ENCODE measurements at regions of chr7 and their contacts with region 1.

Region 1: GRCh38 chr7:17640730-17641377 is 299.4 kb downstream of the SNX13 start:
- DNase-seq: peak; percentile 28
- ATAC-seq: 0 out of 3 replicates have a peak, but pooled peaks have one; percentile 31
- H3K4me3 ChIP-seq: no peak overlapping the region
- H3K27ac ChIP-seq: no peak overlapping the region
- H3K4me1 ChIP-seq: peaks cover 7% of the 10 kb centered on the region; the same call in 1 of the 2 replicates
- H3K27me3 ChIP-seq: no peaks in the 10 kb centered on the region; a peak in 1 of 5 replicates
- CTCF ChIP-seq: peak; percentile 34
- EP300 ChIP-seq: no peak
- POLR2A ChIP-seq: no peak
- RAD21 ChIP-seq: 0 out of 2 replicates have a peak, but pooled peaks have one; percentile 10

Region 2: DNA sequence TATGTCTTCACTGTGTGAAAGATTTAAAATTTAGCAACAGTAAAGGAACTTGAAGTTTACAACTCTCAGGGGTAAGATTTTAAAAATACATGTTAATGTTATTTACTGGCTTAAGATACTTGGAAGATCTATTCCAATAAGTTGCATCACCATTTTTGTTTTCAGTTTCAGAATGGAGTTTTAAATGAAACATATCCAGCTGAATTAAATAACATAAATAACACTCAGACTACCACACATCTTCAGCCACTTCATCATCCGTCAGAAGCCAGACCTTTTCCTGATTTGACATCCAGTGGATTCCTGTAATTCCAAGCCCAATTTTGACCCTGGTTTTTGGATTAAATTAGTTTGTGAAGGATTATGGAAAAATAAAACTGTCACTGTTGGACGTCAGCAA is 298.1 kb before region 1 on chr7:
- CTCF ChIA-PET with region 1: no interaction called
- POLR2A ChIA-PET with region 1: no interaction called
- in situ Hi-C with region 1: no loop called
- intact Hi-C with region 1: loop called (anchors 10 kb)
- DNase-seq: no peak
- ATAC-seq: no peak
- H3K4me3 ChIP-seq: no peak overlapping the region
- H3K27ac ChIP-seq: no peak overlapping the region
- H3K4me1 ChIP-seq: no peaks in the 10 kb centered on the region
- H3K27me3 ChIP-seq: no peaks in the 10 kb centered on the region
- CTCF ChIP-seq: no peak
- EP300 ChIP-seq: no peak
- POLR2A ChIP-seq: no peak
- RAD21 ChIP-seq: no peak

Region 3: GRCh38 chr7:17546599-17546998 is 94.3 kb before region 1 on chr7:
- CTCF ChIA-PET with region 1: no interaction called
- POLR2A ChIA-PET with region 1: no interaction called
- in situ Hi-C with region 1: no loop called
- intact Hi-C with region 1: loop called (anchors 10 kb)
- DNase-seq: no peak
- ATAC-seq: no peak
- H3K4me3 ChIP-seq: no peak overlapping the region
- H3K27ac ChIP-seq: no peak overlapping the region
- H3K4me1 ChIP-seq: peaks cover 17% of the 10 kb centered on the region
- H3K27me3 ChIP-seq: no peaks in the 10 kb centered on the region
- CTCF ChIP-seq: no peak
- EP300 ChIP-seq: no peak
- POLR2A ChIP-seq: no peak
- RAD21 ChIP-seq: no peak

Region 4: GRCh38 chr7:17898111-17898510 is 257.3 kb after region 1 on chr7:
- CTCF ChIA-PET with region 1: no interaction called
- POLR2A ChIA-PET with region 1: no interaction called
- in situ Hi-C with region 1: no loop called
- intact Hi-C with region 1: no loop called
- DNase-seq: no peak
- ATAC-seq: no peak
- H3K4me3 ChIP-seq: no peak overlapping the region
- H3K27ac ChIP-seq: no peak overlapping the region
- H3K4me1 ChIP-seq: peaks cover 6% of the 10 kb centered on the region
- H3K27me3 ChIP-seq: no peaks in the 10 kb centered on the region
- CTCF ChIP-seq: no peak
- EP300 ChIP-seq: no peak
- POLR2A ChIP-seq: no peak
- RAD21 ChIP-seq: no peak

Measured in HepG2 (cell line).